ENCODE measurements at regions of chr1 and their contacts with region 1.

Region 1: DNA sequence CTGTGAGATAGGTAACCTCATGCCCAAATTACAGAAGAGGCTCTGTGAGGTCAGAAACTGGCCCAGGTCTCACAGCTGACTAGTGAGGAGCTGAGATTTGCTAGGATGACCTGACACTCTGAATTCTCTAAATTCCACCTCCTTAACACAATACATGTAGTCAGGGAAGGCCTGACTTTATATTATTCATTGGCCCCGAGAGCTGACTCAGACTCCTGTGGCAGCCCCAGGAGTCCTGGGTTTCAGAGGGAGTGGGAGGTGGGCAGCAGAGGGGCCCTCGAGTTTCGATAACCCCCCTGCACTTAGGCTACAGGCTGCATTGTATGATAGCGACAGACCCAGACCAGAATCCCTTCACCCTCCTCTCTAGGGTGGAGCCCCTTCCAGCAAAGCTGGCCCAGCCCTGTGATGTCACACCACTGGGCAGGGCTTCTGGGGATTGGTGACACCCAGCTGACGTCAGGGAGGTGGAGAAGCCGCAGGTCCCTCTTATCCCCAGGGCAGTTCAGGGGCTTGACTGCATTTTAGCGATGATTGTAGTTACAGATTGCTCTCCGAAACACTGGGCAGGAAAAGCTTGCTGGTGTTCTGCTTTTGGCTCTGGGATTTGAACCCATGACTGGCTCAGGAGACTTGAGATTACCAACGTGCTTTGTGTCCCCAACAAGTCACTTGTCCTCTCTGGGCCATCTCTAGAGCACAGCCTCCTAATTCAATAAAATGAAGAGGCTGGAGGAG is 17.0 kb upstream of the GPR37L1 start:
- DNase-seq: peak; percentile 91 to 95
- H3K4me3 ChIP-seq: peak overlapping the region; percentile 26; the same call in 1 of the 2 replicates
- H3K27ac ChIP-seq: peak overlapping the region; percentile 99
- H3K4me1 ChIP-seq: peaks cover 76% of the 10 kb centered on the region
- H3K27me3 ChIP-seq: no peaks in the 10 kb centered on the region
- CTCF ChIP-seq: no peak

Region 2: GRCh38 chr1:202046227-202046801 is 59.4 kb before region 1 on chr1:
- CTCF ChIA-PET with region 1: interaction called, 3 read pairs
- POLR2A ChIA-PET with region 1: interaction called, 25 read pairs
- intact Hi-C with region 1: loop called (anchors 1 kb)
- DNase-seq: peak; percentile 95 to 97
- H3K4me3 ChIP-seq: peak overlapping the region; percentile 24; the same call in 1 of the 2 replicates
- H3K27ac ChIP-seq: peak overlapping the region; percentile 98
- H3K4me1 ChIP-seq: peaks cover 77% of the 10 kb centered on the region
- H3K27me3 ChIP-seq: no peaks in the 10 kb centered on the region
- CTCF ChIP-seq: no peak

Region 3: GRCh38 chr1:202085682-202086404 is 19.9 kb before region 1 on chr1:
- CTCF ChIA-PET with region 1: interaction called, 6 read pairs
- POLR2A ChIA-PET with region 1: interaction called, 17 read pairs
- intact Hi-C with region 1: loop called (anchors 1 kb)
- DNase-seq: peak; percentile 41 to 53
- H3K4me3 ChIP-seq: no peak overlapping the region
- H3K27ac ChIP-seq: peak overlapping the region; percentile 44
- H3K4me1 ChIP-seq: peaks cover 47% of the 10 kb centered on the region
- H3K27me3 ChIP-seq: no peaks in the 10 kb centered on the region
- CTCF ChIP-seq: no peak

Region 4: DNA sequence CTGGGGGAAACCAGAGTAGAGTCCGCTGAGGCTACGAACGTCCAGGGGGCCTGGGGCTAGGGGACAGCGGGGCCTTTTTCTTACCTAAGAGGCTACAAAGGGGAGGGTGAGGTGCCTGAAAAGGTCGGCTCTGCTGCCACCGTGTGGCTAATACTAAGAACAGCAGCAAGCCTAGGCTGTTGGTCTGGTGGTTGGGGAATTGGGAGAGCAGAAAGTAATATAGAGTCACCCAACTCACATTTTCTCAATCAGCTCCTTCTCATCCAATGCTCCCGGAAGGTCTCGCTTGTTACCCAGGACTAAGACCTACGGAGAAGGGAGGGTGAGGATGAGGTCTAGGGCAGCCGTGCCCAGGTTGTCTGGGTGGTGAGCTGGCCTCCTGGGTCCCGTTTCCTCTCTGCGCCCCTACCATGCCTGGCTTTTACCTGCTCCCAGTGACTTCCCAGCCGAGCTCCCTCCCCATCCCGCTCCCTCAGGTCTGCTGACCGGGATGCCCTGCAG is 29.6 kb after region 1 on chr1:
- CTCF ChIA-PET with region 1: no interaction called
- POLR2A ChIA-PET with region 1: no interaction called
- intact Hi-C with region 1: no loop called
- DNase-seq: peak; percentile 49 to 50
- H3K4me3 ChIP-seq: no peak overlapping the region
- H3K27ac ChIP-seq: no peak overlapping the region
- H3K4me1 ChIP-seq: peaks cover 12% of the 10 kb centered on the region
- H3K27me3 ChIP-seq: no peaks in the 10 kb centered on the region
- CTCF ChIP-seq: peak; percentile 90

Measured in PC-9 (cell line).